HepG2 (cell line): ENCODE measurements at regions of chr15 and their contacts with region 1.

Region 1: GRCh38 chr15:50908210-50909009 is at the start of gene AP4E1:
- DNase-seq: peak; percentile 85
- ATAC-seq: peak; percentile 81
- H3K4me3 ChIP-seq: peak within 1 kb of the TSS; percentile 85 to 99 (median 97)
- H3K27ac ChIP-seq: peak within 1 kb of the TSS; percentile 87
- H3K4me1 ChIP-seq: peaks cover 13% of the 10 kb centered on the region
- H3K27me3 ChIP-seq: no peaks in the 10 kb centered on the region; a peak in 1 of 5 replicates
- CTCF ChIP-seq: peak; percentile 94
- EP300 ChIP-seq: peak; percentile 38 to 53; a peak in 2 of 4 replicates
- POLR2A ChIP-seq: peak; percentile 72 to 84
- RAD21 ChIP-seq: peak; percentile 87
- total RNA-seq, gene AP4E1: 7.8 and 11.8 TPM in 2 replicates

Region 2: DNA sequence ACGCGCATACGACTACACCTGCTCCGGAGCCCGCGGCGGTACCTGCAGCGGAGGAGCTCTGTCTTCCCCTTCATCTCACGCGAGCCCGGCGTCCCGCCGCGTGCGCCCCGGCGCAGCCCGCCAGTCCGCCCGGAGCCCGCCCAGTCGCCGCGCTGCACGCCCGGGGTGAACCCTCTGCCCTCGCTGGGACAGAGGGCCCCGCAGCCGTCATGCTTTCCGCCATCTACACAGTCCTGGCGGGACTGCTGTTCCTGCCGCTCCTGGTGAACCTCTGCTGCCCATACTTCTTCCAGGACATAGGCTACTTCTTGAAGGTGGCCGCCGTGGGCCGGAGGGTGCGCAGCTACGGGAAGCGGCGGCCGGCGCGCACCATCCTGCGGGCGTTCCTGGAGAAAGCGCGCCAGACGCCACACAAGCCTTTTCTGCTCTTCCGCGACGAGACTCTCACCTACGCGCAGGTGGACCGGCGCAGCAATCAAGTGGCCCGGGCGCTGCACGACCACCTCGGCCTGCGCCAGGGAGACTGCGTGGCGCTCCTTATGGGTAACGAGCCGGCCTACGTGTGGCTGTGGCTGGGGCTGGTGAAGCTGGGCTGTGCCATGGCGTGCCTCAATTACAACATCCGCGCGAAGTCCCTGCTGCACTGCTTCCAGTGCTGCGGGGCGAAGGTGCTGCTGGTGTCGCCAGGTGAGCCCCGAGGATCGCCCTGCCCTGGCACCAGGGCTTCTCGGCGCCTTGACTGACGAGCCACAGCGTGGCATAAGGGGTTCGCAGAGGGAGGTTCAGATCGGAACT is 726.0 kb before region 1 on chr15:
- CTCF ChIA-PET with region 1: interaction called, 3 read pairs
- POLR2A ChIA-PET with region 1: no interaction called
- in situ Hi-C with region 1: loop called (anchors 25 kb)
- intact Hi-C with region 1: no loop called
- DNase-seq: no peak
- ATAC-seq: peak; percentile 83
- H3K4me3 ChIP-seq: peak overlapping the region; percentile 58 to 86 (median 83)
- H3K27ac ChIP-seq: peak overlapping the region; percentile 23
- H3K4me1 ChIP-seq: peaks cover 58% of the 10 kb centered on the region
- H3K27me3 ChIP-seq: no peaks in the 10 kb centered on the region
- CTCF ChIP-seq: no peak
- EP300 ChIP-seq: no peak
- POLR2A ChIP-seq: peak in 1 of 2 experiments; percentile 60; a peak in 2 of 4 replicates
- RAD21 ChIP-seq: no peak; the same call in 1 of the 2 replicates

Region 3: GRCh38 chr15:50354838-50355618 is 553.4 kb before region 1 on chr15 and contains the start of gene GABPB1:
- CTCF ChIA-PET with region 1: no interaction called
- POLR2A ChIA-PET with region 1: no interaction called
- in situ Hi-C with region 1: no loop called
- intact Hi-C with region 1: loop called (anchors 5 kb)
- DNase-seq: peak; percentile 87
- ATAC-seq: peak; percentile 87
- H3K4me3 ChIP-seq: peak within 1 kb of the TSS; percentile 80 to 96 (median 93)
- H3K27ac ChIP-seq: peak within 1 kb of the TSS; percentile 100
- H3K4me1 ChIP-seq: peaks cover 58% of the 10 kb centered on the region
- H3K27me3 ChIP-seq: no peaks in the 10 kb centered on the region; a peak in 1 of 5 replicates
- CTCF ChIP-seq: no peak
- EP300 ChIP-seq: no peak; a peak in 1 of 4 replicates
- POLR2A ChIP-seq: peak; percentile 82 to 87
- RAD21 ChIP-seq: peak; percentile 6; the same call in 1 of the 2 replicates
- total RNA-seq, gene GABPB1: 39.5 and 50.8 TPM in 2 replicates

Region 4: DNA sequence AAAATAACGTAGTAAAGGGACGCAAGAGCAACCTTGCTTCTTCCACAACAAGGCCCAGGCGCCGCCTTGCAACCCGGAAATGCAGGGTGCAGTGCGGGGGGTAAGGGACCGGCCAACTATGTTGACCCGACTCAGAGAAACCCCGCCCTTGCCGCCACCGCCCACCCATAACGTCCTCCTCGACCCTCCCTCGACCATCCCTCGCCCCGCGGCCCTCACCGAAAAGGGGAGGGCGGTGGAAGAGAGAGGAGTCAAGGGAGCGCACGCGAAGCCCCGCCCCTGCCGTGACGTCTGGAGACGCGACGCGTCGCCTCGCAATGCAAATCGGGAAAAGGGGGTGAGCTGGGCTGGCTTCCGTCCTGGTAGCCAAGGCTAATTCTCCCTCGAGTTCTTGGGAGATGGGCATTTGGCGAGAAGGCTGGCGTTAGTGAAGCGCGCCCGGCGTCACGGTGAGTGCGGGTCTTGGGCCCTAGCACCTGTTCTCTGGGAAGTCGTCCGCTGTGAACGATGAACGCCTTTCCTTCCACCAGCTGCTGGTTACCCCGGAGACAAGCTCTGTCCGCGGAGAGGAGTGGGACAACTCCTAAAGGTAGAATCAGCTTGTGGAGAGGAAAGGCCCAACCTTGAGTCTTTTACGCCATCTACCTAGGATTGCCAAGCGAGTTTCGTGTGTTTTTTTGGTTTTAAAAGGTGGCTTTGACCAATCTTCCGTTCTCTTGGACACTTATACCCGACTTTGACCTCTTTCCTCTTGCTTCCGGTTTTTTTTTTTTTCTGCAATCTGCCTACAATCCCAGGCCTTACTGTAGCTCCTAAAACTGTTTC is 484.1 kb before region 1 on chr15 and contains the start of gene USP8:
- CTCF ChIA-PET with region 1: no interaction called
- POLR2A ChIA-PET with region 1: interaction called, 6 read pairs
- in situ Hi-C with region 1: no loop called
- intact Hi-C with region 1: loop called (anchors 5 kb)
- DNase-seq: peak; percentile 97
- ATAC-seq: peak; percentile 96
- H3K4me3 ChIP-seq: peak within 1 kb of the TSS; percentile 68 to 86 (median 80)
- H3K27ac ChIP-seq: peak within 1 kb of the TSS; percentile 89
- H3K4me1 ChIP-seq: peaks cover 50% of the 10 kb centered on the region
- H3K27me3 ChIP-seq: no peaks in the 10 kb centered on the region; a peak in 1 of 5 replicates
- CTCF ChIP-seq: no peak
- EP300 ChIP-seq: no peak
- POLR2A ChIP-seq: peak; percentile 94 to 98
- RAD21 ChIP-seq: no peak
- total RNA-seq, gene USP8: 50.7 and 81.7 TPM in 2 replicates

Region 5: GRCh38 chr15:50675536-50676144 is 232.8 kb before region 1 on chr15:
- CTCF ChIA-PET with region 1: interaction called, 13 read pairs
- POLR2A ChIA-PET with region 1: no interaction called
- in situ Hi-C with region 1: no loop called
- intact Hi-C with region 1: loop called (anchors 1 kb)
- DNase-seq: no peak
- ATAC-seq: no peak
- H3K4me3 ChIP-seq: no peak overlapping the region
- H3K27ac ChIP-seq: no peak overlapping the region
- H3K4me1 ChIP-seq: peaks cover 15% of the 10 kb centered on the region; the same call in 1 of the 2 replicates
- H3K27me3 ChIP-seq: no peaks in the 10 kb centered on the region; a peak in 1 of 5 replicates
- CTCF ChIP-seq: peak; percentile 54
- EP300 ChIP-seq: no peak
- POLR2A ChIP-seq: no peak
- RAD21 ChIP-seq: no peak